ENCODE measurements at regions of chr11 and their contacts with region 1.

Region 1: GRCh38 chr11:131038597-131038996 is 122.3 kb upstream of the SNX19 start:
- DNase-seq: no peak
- ATAC-seq: peak; percentile 89
- H3K4me3 Mint-ChIP-seq: no peak overlapping the region
- H3K27ac Mint-ChIP-seq: no peak overlapping the region
- H3K4me1 Mint-ChIP-seq: peaks cover 24% of the 10 kb centered on the region
- H3K27me3 Mint-ChIP-seq: no peaks in the 10 kb centered on the region
- CTCF ChIP-seq: no peak

Region 2: DNA sequence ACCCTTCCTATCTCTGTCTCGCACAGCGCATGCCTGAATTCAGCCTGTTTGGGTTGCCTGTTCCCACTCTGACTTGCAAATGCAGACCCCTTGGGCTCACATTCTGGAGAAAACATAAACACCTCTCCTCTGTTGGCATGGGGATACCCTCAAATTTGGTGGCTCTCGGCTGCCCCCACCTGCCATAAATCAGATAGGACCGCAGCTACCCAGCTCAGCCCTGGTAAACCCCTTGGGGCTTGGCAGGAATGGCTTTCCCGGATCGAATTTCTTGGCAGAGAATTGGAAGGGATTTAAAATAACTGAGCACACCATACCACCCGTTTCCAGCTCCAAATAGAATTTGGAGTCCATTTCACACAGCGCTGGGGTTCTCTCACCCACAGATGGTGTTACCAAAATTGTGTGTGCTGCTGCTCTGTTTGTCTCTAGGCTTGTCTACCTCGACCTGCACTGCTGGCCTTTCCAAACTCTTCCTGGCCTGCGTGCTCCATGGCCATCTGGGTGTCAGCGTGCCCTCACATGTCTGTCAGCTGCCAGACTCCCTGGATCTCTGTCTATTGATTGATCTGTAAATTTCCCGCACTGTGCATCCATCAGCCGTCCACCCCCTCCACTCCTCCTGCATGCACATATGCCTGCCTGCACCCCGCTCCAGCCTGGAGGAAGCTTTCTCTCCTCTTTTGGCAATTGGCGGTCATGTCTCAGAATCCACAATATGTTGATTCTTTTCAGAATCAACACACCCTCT is 465.8 kb after region 1 on chr11:
- CTCF ChIA-PET with region 1: interaction called, 13 read pairs
- POLR2A ChIA-PET with region 1: no interaction called
- DNase-seq: peak; percentile 78
- ATAC-seq: peak; percentile 99
- H3K4me3 Mint-ChIP-seq: no peak overlapping the region
- H3K27ac Mint-ChIP-seq: 0 out of 2 replicates have a peak overlapping the region, but pooled peaks have one; percentile 26
- H3K4me1 Mint-ChIP-seq: peaks cover 18% of the 10 kb centered on the region
- H3K27me3 Mint-ChIP-seq: no peaks in the 10 kb centered on the region
- CTCF ChIP-seq: peak; percentile 36